Prostate gland (tissue), 2 donors: ENCODE measurements at regions of chr6 and their contacts with region 1.

Region 1: DNA sequence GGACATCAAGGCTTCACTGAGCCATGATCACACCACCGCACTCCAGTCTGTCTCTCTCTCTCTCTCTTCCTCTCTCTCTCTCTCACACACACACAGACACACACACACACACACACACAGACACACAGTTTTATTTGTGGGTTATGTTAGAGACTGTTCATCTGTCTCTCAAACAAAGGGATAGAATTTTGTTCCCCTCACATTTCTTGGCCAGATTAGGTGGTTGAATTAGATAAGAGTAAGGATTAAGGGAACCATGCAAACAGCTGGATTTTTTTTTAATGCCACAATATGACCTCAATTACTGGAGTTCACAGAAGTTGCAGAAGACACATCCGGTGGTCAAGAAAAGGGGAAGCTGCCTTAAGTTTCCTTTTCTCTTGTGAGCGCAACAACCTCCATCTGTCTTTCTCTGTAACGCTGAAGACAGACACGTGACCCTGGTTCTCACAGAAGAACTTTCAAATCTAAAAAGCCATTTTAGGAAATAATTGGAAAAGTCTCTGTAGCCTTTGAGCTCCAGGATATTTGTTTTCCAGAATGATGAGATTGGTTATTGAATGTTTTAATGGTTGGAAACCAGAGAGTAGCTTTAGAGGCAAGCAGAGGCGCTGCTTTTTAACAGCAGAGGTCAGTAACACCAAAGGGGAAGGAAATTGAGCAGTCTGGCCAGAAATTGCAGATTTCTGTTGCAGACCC is 33.0 kb upstream of the LGSN start:
- DNase-seq: no peak
- H3K4me3 ChIP-seq: no peak overlapping the region
- H3K27ac ChIP-seq: no peak overlapping the region
- H3K4me1 ChIP-seq: no peaks in the 10 kb centered on the region
- H3K27me3 ChIP-seq: no peaks in the 10 kb centered on the region
- CTCF ChIP-seq: peak in 3 of 4 experiments; percentile 31 to 53 (median 53)
- POLR2A ChIP-seq: no peak

Region 2: DNA sequence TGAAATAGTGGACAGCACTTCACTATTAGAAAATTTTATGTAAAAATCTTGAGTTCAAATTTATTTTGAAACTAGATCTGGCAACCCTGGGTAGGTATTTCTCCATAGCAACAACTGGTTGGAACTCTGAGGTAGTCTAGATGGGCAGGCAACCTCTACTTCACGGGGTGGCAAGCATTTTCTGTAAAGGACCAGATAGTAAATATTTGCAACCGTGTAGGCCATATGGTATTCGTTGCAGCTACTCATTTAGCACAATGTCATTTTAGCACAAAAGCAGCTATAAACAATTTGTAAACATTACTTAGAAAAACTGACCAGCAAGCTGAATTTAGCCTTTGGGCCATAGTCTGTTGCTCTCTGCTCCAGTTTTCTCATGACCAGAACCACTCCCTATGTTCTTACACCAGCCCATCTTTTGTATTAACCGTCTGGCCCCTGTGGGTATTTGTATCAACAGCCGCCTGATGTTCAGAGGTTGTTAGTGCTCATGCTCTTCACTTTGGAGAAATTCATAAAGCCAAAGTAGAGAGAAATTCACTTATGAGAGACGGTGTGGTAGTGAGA is 62.2 kb before region 1 on chr6:
- intact Hi-C with region 1: no loop called
- DNase-seq: no peak
- H3K4me3 ChIP-seq: no peak overlapping the region
- H3K27ac ChIP-seq: no peak overlapping the region
- H3K4me1 ChIP-seq: no peaks in the 10 kb centered on the region
- H3K27me3 ChIP-seq: no peaks in the 10 kb centered on the region
- CTCF ChIP-seq: no peak
- POLR2A ChIP-seq: no peak

Region 3: DNA sequence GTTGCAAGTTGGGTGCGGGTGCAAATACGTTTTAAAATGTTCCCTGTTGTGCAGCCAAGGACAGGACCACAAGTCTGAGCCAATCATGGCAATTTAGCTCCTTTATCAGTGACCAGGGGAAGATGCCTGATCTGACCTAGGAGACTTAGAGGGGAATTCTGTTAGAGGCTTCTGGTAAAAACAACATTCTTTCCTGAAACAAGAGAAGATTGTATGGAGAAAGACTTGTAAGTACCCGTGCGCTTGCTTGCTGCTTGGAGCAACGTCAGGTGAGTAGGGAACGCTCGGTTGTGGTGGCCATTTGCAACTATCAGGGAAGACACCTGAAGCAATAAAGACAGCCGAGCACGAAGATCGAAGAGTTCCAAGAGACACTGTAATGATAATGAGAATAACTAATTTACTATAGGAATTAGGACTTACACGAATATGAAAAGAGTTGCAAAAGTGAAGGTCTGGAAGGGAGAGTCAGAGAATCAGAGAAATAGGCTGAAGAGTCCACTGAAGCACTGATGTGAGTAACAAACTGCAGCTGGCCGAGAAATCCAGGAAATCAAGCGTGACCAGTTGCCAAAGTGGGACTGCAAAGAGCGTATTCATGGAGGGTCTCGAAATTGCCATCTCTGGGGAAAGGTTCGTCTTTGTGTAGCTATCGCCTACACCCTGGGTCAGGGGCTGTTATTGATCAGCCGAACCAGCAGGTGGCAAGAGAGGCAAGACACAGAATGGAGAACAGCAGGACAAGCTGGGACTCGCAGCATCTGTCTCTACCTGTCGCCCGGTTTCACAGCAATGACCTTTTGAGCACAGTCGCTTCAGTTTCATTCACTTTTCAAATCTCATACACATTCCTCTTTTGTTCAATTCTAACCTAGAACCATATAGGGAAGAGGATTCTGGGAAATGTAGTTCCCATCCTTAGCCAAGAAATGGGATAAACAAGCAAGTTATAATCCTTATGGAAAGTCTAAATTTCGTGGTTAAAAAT is 245.6 kb after region 1 on chr6:
- intact Hi-C with region 1: loop called (anchors 10 kb)
- DNase-seq: peak; percentile 60
- H3K4me3 ChIP-seq: peak overlapping the region; percentile 26 to 29
- H3K27ac ChIP-seq: no peak overlapping the region
- H3K4me1 ChIP-seq: no peaks in the 10 kb centered on the region
- H3K27me3 ChIP-seq: no peaks in the 10 kb centered on the region
- CTCF ChIP-seq: peak; percentile 58 to 87 (median 74)
- POLR2A ChIP-seq: no peak

Region 4: GRCh38 chr6:63764318-63764916 is 411.7 kb after region 1 on chr6:
- intact Hi-C with region 1: loop called (anchors 5 kb)
- DNase-seq: no peak
- H3K4me3 ChIP-seq: no peak overlapping the region
- H3K27ac ChIP-seq: no peak overlapping the region
- H3K4me1 ChIP-seq: no peaks in the 10 kb centered on the region
- H3K27me3 ChIP-seq: no peaks in the 10 kb centered on the region
- CTCF ChIP-seq: peak; percentile 24 to 94 (median 58)
- POLR2A ChIP-seq: no peak